Activated CD4-positive, alpha-beta T cell treated with anti-CD3 and anti-CD28 coated beads, Interleukin-2, amount 10 ng/mL, durations not matched to agents 24 days and 14 days (primary cell): ENCODE measurements at regions of chr1 and their contacts with region 1.

Region 1: GRCh38 chr1:112674439-112674985 is at the start of gene MOV10:
- DNase-seq: peak; percentile 91
- H3K4me3 Mint-ChIP-seq: peak within 1 kb of the TSS; percentile 97
- H3K27ac Mint-ChIP-seq: peak within 1 kb of the TSS; percentile 98
- H3K4me1 Mint-ChIP-seq: peaks cover 38% of the 10 kb centered on the region
- H3K27me3 Mint-ChIP-seq: no peaks in the 10 kb centered on the region
- total RNA-seq, gene MOV10: 70.7 and 76.7 TPM in 2 replicates

Region 2: DNA sequence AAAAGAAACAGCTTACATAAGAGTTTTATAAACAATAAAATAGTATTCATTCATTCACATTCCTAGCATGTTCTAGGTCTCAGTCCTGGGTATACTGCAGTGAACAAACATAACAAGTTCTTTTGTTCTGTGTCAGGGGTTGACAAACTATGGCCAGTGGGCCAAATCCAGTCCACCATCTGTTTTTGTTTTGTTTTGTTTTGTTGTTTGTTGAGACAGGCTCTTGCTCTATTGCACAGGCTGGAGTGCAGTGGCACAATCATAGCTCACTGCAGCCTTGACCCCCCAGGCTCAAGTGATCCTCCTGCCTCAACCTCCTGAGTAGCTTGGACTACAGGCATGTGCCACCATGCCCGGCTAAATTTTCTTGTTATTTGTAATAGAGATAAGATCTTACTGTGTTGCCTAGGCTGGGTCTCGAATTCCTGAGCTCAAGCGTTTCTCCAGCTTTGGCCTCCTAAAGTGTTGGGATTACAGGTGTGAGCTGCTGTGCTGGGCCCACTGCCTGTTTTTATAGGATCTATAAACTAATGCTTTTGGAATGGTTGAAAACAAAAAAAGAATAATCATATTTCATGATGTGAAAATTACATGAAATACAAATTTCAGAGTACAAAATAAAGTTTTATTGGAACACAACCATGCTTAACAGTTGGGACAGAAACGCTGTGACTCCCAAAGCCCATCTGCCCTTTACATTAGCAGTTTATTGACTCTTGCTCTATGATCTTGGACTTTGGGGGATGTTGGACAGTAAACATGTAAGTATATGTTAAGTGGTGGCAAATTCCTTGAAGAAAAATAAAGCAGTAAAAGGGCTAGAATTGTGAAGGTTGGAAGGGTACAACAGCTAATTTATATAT is 37.0 kb before region 1 on chr1:
- intact Hi-C with region 1: loop called (anchors 5 kb)
- DNase-seq: no peak
- H3K4me3 Mint-ChIP-seq: no peak overlapping the region
- H3K27ac Mint-ChIP-seq: no peak overlapping the region
- H3K4me1 Mint-ChIP-seq: peaks cover 38% of the 10 kb centered on the region
- H3K27me3 Mint-ChIP-seq: no peaks in the 10 kb centered on the region

Region 3: GRCh38 chr1:112688781-112689193 is 14.3 kb after region 1 on chr1:
- intact Hi-C with region 1: no loop called
- DNase-seq: no peak
- H3K4me3 Mint-ChIP-seq: no peak overlapping the region
- H3K27ac Mint-ChIP-seq: peak overlapping the region; percentile 5
- H3K4me1 Mint-ChIP-seq: peaks cover 2% of the 10 kb centered on the region
- H3K27me3 Mint-ChIP-seq: no peaks in the 10 kb centered on the region

Region 4: GRCh38 chr1:112706908-112707663 is 32.6 kb after region 1 on chr1 and contains the start of gene RHOC:
- intact Hi-C with region 1: loop called (anchors 1 kb)
- DNase-seq: peak; percentile 91
- H3K4me3 Mint-ChIP-seq: peak within 1 kb of the TSS; percentile 87
- H3K27ac Mint-ChIP-seq: peak within 1 kb of the TSS; percentile 94
- H3K4me1 Mint-ChIP-seq: peaks cover 56% of the 10 kb centered on the region
- H3K27me3 Mint-ChIP-seq: peaks cover 21% of the 10 kb centered on the region
- total RNA-seq, gene RHOC: 48.5 and 53.4 TPM in 2 replicates

Region 5: GRCh38 chr1:112826212-112826950 is 151.9 kb after region 1 on chr1:
- intact Hi-C with region 1: no loop called
- DNase-seq: no peak
- H3K4me3 Mint-ChIP-seq: no peak overlapping the region
- H3K27ac Mint-ChIP-seq: no peak overlapping the region
- H3K4me1 Mint-ChIP-seq: peaks cover 2% of the 10 kb centered on the region
- H3K27me3 Mint-ChIP-seq: peaks cover 23% of the 10 kb centered on the region